ENCODE measurements at regions of chr22 and their contacts with region 1.

Region 1: DNA sequence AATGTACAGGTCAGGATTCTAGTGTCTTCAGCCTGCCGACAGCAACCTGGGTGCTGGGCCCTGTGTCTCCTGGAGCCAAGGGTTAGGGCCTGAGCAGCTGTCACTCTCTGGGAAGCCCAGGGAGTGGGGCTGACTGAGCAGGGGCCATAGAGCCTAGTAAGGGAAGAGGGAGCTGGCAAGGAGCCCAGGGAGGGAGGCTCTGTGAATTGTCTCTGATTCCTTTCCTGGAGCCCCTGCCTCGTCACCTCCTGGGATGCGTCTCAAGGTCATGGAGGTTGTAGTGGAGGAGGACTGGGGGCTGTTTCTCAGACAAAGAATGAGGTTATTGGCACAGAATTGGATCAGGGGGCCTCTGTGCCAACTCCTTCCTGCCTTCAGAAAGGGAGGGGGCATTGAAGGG is 11.8 kb downstream of the SOX10 start:
- DNase-seq: no peak
- H3K4me3 ChIP-seq: no peak overlapping the region
- H3K27ac ChIP-seq: 0 out of 2 replicates have a peak overlapping the region, but pooled peaks have one; percentile 11
- H3K4me1 ChIP-seq: peaks cover 6 to 20% (median 11%) of the 10 kb centered on the region in 4 experiments
- H3K27me3 ChIP-seq: no peaks in the 10 kb centered on the region
- CTCF ChIP-seq: no peak
- EP300 ChIP-seq: no peak
- POLR2A ChIP-seq: no peak
- RAD21 ChIP-seq: no peak

Region 2: DNA sequence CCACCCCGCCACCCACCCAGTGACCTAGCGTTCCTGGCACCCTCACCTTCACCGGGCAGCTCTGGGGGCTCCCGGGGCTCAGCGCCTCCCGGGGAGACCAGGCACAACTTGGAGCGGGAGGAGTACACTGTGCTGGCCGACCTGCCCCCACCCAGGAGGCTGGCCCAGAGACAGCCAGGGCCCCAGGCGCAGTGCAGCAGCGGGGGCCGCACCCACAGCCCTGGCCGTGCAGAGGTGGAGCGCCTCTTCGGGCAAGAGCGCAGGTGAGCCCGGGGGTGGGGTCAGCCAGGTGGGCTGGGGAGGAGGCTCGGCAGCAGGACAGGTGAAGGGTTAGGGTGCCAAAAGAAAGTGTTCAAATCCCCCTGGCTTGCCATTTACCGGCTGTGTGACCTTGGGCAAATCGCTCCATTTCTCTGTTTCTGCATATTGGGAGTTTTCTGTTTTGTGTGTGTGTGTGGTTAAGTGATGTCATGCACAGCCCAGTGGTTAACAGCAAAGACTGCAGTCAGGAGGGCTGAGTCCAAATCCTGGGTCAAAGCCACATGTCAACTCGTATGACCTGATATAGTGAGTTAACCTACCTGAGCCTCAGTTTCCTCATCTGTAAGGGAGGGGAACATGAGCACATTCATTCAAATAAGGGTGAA is 246.2 kb before region 1 on chr22:
- CTCF ChIA-PET with region 1: no interaction called
- POLR2A ChIA-PET with region 1: no interaction called
- DNase-seq: no peak
- H3K4me3 ChIP-seq: no peak overlapping the region
- H3K27ac ChIP-seq: no peak overlapping the region
- H3K4me1 ChIP-seq: no peaks in the 10 kb centered on the region
- H3K27me3 ChIP-seq: no peaks in the 10 kb centered on the region
- CTCF ChIP-seq: peak in 1 of 3 experiments; percentile 11; a peak in 1 of 4 replicates
- EP300 ChIP-seq: no peak
- POLR2A ChIP-seq: no peak
- RAD21 ChIP-seq: peak in 1 of 2 experiments; percentile 6; a peak in 1 of 4 replicates

Region 3: GRCh38 chr22:37959231-37959825 is 13.2 kb before region 1 on chr22:
- CTCF ChIA-PET with region 1: interaction called, 48 read pairs
- POLR2A ChIA-PET with region 1: interaction called, 10 read pairs
- DNase-seq: no peak
- H3K4me3 ChIP-seq: no peak overlapping the region
- H3K27ac ChIP-seq: no peak overlapping the region
- H3K4me1 ChIP-seq: no peaks in the 10 kb centered on the region
- H3K27me3 ChIP-seq: no peaks in the 10 kb centered on the region
- CTCF ChIP-seq: no peak
- EP300 ChIP-seq: no peak
- POLR2A ChIP-seq: no peak
- RAD21 ChIP-seq: no peak

Region 4: GRCh38 chr22:38069372-38070249 is 97.1 kb after region 1 on chr22:
- CTCF ChIA-PET with region 1: no interaction called
- POLR2A ChIA-PET with region 1: no interaction called
- DNase-seq: no peak
- H3K4me3 ChIP-seq: no peak overlapping the region
- H3K27ac ChIP-seq: no peak overlapping the region; the same call in 1 of the 2 replicates
- H3K4me1 ChIP-seq: no peaks in the 10 kb centered on the region
- H3K27me3 ChIP-seq: no peaks in the 10 kb centered on the region
- CTCF ChIP-seq: peak; percentile 64 to 88 (median 65)
- EP300 ChIP-seq: no peak
- POLR2A ChIP-seq: no peak
- RAD21 ChIP-seq: peak; percentile 57 to 76; a peak in 3 of 4 replicates